Activated T-helper 1 cell treated with anti-CD3 and anti-CD28 coated beads, Interleukin-12 subunit alpha, Interleukin-12 subunit beta, Interleukin-2, Interleukin-4 antibody, amounts not matched to agents 30 ng/mL and 10 ng/mL and 1 ng/mL, durations not matched to agents 14 hours and 24 hours and 36 hours (primary cell): ENCODE measurements at regions of chr5 and their contacts with region 1.

Region 1: GRCh38 chr5:55534436-55535198 is at the start of gene PLPP1:
- DNase-seq: peak; percentile 84
- H3K4me3 Mint-ChIP-seq: peak within 1 kb of the TSS; percentile 91
- H3K27ac Mint-ChIP-seq: peak within 1 kb of the TSS; percentile 83
- H3K4me1 Mint-ChIP-seq: peaks cover 56% of the 10 kb centered on the region
- H3K27me3 Mint-ChIP-seq: peaks cover 4% of the 10 kb centered on the region
- total RNA-seq, gene PLPP1: 25.8 and 27.5 TPM in 2 replicates

Region 2: DNA sequence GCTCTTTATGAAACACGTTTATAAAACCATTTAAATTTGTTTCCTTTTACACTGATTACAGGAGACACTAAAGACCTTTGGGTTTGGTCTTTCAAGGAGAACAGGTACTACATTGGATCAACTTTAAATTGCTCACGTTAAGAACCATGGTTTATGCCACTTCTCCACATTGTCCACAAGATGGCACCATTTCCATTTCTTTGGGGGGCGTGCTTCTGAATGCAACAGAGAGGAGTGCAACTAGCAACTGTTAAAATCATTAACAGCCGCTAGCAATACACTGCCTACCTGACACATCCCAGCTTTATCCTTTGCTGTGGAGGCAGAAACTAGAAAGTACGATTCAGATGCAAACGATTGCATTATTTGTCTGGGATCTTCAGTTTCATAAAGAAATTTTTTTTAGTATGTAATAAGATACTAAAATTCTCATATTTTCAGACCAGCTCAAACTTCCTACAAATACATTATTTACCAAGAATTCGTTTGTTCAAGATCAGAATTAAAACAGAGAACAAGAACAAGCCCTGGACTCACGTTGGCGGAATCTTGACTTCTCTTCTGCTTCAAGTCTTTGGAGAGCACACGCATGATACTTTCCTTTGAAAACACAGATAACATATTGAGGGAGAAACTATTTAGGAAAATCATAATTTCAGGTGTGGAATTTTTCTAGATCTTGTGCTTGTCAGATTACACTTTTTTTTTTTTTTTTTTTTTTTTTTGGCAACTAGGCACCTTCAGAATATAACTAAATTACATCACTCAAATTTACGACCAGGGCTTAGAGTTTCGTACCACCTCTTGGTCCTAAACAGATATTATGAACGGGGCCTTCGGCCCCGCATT is 362.3 kb before region 1 on chr5:
- intact Hi-C with region 1: loop called (anchors 2 kb)
- DNase-seq: peak; percentile 61
- H3K4me3 Mint-ChIP-seq: peak overlapping the region; percentile 86
- H3K27ac Mint-ChIP-seq: no peak overlapping the region
- H3K4me1 Mint-ChIP-seq: peaks cover 46% of the 10 kb centered on the region
- H3K27me3 Mint-ChIP-seq: peaks cover 78% of the 10 kb centered on the region

Region 3: DNA sequence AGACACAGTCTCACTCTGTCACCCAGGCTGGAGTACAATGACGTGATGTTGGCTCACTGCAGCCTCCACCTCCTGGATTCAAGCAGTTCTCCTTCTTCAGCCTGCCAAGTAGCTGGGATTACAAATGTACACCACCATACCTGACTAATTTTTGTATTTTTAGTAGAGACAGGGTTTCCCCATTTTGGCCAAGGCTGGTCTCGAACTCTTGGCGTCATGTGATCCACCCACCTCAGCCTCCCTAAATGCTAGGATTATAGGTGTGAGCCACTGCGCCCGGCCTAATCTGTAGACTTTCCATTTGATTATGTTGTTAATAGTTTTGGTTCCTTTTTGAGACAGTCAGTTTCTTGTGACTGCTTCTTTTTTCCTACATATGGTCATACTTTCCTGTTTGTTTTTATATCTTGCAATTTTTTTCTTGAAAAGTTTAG is 195.8 kb before region 1 on chr5:
- intact Hi-C with region 1: loop called (anchors 2 kb)
- DNase-seq: no peak
- H3K4me3 Mint-ChIP-seq: peak overlapping the region; percentile 37
- H3K27ac Mint-ChIP-seq: peak overlapping the region; percentile 87
- H3K4me1 Mint-ChIP-seq: peaks cover 22% of the 10 kb centered on the region
- H3K27me3 Mint-ChIP-seq: no peaks in the 10 kb centered on the region

Region 4: DNA sequence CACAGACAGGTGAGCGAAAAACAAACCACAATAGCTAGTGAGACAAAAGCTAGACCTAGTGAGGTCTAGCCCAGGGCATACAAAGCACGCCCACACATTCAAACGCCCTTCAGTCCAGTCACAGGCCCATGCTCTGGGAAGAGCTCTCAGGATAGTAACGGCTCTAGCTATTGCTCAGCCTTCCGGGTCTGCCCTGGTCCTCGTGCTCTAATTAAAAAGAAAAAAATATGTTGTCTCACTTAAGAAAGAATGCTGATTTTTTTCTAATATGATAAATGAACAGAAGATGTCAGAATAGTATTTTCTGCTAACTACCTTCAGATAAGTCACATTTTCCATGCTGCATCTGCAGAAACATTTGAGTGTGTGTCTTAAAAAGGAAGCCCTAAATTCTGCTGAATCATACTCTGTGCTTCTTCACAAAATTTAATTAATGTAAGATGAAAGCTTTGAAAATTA is 94.4 kb before region 1 on chr5:
- intact Hi-C with region 1: loop called (anchors 5 kb)
- DNase-seq: no peak
- H3K4me3 Mint-ChIP-seq: no peak overlapping the region
- H3K27ac Mint-ChIP-seq: peak overlapping the region; percentile 77
- H3K4me1 Mint-ChIP-seq: peaks cover 35% of the 10 kb centered on the region
- H3K27me3 Mint-ChIP-seq: no peaks in the 10 kb centered on the region

Region 5: DNA sequence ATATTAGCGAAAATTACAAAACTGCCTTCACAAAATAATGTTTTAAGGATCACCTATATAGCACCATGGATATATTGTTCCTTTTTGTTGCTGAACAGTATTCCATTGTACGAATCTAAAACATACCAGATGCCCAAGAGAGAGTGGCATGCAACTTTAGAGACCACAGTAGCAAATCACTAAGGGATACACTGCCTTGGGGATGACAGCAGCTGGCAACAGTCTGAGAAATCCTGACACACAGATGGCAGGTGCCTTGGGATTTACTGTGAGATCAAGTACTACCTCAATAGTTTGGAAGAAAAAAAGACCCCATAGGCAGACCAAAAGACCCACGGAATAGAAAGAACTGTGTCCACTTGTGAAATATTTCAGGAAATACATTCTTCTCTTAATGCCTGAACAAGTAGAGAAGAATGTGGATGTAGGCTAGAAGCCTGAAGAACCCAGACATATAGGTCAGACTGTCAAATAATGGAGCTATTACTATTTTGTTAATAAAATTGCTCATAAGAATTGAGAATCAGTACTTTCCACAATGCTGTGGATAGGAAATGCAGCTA is 53.2 kb before region 1 on chr5:
- intact Hi-C with region 1: no loop called
- DNase-seq: no peak
- H3K4me3 Mint-ChIP-seq: no peak overlapping the region
- H3K27ac Mint-ChIP-seq: no peak overlapping the region
- H3K4me1 Mint-ChIP-seq: peaks cover 20% of the 10 kb centered on the region
- H3K27me3 Mint-ChIP-seq: no peaks in the 10 kb centered on the region

Region 6: GRCh38 chr5:55593115-55593472 is 58.5 kb after region 1 on chr5:
- intact Hi-C with region 1: loop called (anchors 2 kb)
- DNase-seq: no peak
- H3K4me3 Mint-ChIP-seq: no peak overlapping the region
- H3K27ac Mint-ChIP-seq: no peak overlapping the region
- H3K4me1 Mint-ChIP-seq: peaks cover 46% of the 10 kb centered on the region
- H3K27me3 Mint-ChIP-seq: no peaks in the 10 kb centered on the region

Region 7: GRCh38 chr5:55691265-55692105 is 156.9 kb after region 1 on chr5:
- intact Hi-C with region 1: loop called (anchors 2 kb)
- DNase-seq: no peak
- H3K4me3 Mint-ChIP-seq: no peak overlapping the region
- H3K27ac Mint-ChIP-seq: no peak overlapping the region
- H3K4me1 Mint-ChIP-seq: peaks cover 11% of the 10 kb centered on the region
- H3K27me3 Mint-ChIP-seq: no peaks in the 10 kb centered on the region

Region 8: GRCh38 chr5:56814963-56815658 is 1280.5 kb after region 1 on chr5 and contains the start of gene MAP3K1:
- intact Hi-C with region 1: loop called (anchors 5 kb)
- DNase-seq: peak; percentile 72
- H3K4me3 Mint-ChIP-seq: peak within 1 kb of the TSS; percentile 91
- H3K27ac Mint-ChIP-seq: peak within 1 kb of the TSS; percentile 82
- H3K4me1 Mint-ChIP-seq: peaks cover 48% of the 10 kb centered on the region
- H3K27me3 Mint-ChIP-seq: peaks cover 2% of the 10 kb centered on the region
- total RNA-seq, gene MAP3K1: 23.6 and 25.3 TPM in 2 replicates